ENCODE measurements at regions of chr3 and their contacts with region 1.

Region 1: GRCh38 chr3:152574461-152575079 is 260.4 kb upstream of the P2RY1 start:
- DNase-seq: peak; percentile 47
- ATAC-seq: peak; percentile 69
- H3K4me3 Mint-ChIP-seq: no peak overlapping the region
- H3K27ac Mint-ChIP-seq: no peak overlapping the region
- H3K4me1 Mint-ChIP-seq: peaks cover 20% of the 10 kb centered on the region
- H3K27me3 Mint-ChIP-seq: no peaks in the 10 kb centered on the region
- CTCF ChIP-seq: no peak

Region 2: DNA sequence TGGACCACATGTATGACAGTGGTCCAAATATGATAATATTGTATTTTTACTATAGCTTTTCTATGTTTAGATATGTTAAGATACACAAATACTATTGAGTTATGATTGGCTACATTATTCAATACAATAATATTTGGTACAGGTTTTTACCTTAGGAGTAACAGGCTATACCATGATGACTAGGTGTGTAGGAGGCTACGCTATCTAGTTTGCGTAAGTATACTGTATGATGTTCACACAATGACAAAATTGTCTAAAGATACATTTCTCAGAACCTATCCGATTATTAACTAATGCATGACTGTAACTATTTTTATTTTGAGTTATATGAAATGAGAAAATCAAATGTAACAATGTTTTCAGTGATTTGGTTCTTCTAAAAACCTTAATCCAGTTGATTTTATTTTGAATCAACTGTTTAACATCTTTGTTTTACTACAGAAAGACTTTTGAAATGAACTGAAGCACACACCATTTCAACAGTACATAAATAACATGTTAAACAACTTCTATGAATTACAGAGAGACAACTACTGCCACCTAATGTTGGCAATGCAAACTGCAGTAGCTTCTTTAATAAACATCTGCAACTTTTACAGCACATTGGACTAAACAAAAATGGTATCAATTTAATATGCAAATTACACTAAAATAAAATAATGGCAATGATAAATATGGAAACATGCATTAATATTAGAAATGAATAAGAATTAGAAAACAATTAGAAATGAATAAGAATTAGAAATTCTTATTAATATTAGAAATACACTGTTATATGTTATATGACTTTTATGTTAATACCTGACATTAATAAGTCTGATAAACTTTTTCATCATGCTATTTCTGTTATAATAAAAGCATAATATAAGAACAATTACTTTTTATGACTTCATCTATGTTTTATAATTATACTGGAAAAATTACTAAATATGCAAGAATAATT is 50.1 kb before region 1 on chr3:
- CTCF ChIA-PET with region 1: interaction called, 10 read pairs
- POLR2A ChIA-PET with region 1: interaction called, 3 read pairs
- DNase-seq: no peak
- ATAC-seq: 0 out of 2 replicates have a peak, but pooled peaks have one; percentile 24
- H3K4me3 Mint-ChIP-seq: no peak overlapping the region
- H3K27ac Mint-ChIP-seq: no peak overlapping the region
- H3K4me1 Mint-ChIP-seq: peaks cover 4% of the 10 kb centered on the region; the same call in 1 of the 2 replicates
- H3K27me3 Mint-ChIP-seq: no peaks in the 10 kb centered on the region
- CTCF ChIP-seq: peak; percentile 34; the same call in 1 of the 2 replicates

Region 3: GRCh38 chr3:152564459-152564858 is 10.1 kb before region 1 on chr3:
- CTCF ChIA-PET with region 1: no interaction called
- POLR2A ChIA-PET with region 1: no interaction called
- DNase-seq: no peak
- ATAC-seq: no peak
- H3K4me3 Mint-ChIP-seq: no peak overlapping the region
- H3K27ac Mint-ChIP-seq: no peak overlapping the region
- H3K4me1 Mint-ChIP-seq: no peaks in the 10 kb centered on the region
- H3K27me3 Mint-ChIP-seq: no peaks in the 10 kb centered on the region
- CTCF ChIP-seq: no peak

Region 4: DNA sequence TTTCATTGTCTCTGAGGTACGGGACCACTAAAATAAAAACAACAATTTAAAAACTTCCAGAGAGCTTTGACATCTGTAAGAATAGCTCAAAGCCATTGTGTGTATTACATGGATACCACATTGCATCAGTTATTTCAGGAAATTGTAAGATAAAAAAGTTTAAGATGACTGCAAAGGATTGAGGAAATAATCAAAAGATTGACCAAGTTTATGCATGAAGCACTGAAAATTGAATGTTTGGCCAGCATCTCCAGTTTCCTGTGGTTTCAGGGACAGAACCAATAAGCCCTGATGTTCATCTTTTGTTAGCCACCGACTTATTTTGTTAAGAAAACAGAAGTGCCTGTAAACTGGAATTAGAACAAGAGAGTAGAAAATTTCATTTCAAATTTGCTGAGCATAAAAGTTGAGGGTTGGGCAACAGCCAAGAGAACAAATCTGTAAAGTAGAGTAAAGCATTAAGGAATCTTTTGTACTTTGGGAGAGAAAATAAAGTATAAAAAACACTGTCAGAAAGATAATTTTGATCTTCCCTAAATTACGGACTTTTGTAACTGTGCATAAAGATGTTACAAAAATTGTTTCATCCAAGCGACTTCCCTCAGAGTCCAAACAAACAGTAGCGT is 48.8 kb after region 1 on chr3:
- CTCF ChIA-PET with region 1: no interaction called
- POLR2A ChIA-PET with region 1: no interaction called
- DNase-seq: no peak
- ATAC-seq: no peak
- H3K4me3 Mint-ChIP-seq: no peak overlapping the region
- H3K27ac Mint-ChIP-seq: peak overlapping the region; percentile 44
- H3K4me1 Mint-ChIP-seq: peaks cover 23% of the 10 kb centered on the region
- H3K27me3 Mint-ChIP-seq: no peaks in the 10 kb centered on the region
- CTCF ChIP-seq: no peak

Region 5: DNA sequence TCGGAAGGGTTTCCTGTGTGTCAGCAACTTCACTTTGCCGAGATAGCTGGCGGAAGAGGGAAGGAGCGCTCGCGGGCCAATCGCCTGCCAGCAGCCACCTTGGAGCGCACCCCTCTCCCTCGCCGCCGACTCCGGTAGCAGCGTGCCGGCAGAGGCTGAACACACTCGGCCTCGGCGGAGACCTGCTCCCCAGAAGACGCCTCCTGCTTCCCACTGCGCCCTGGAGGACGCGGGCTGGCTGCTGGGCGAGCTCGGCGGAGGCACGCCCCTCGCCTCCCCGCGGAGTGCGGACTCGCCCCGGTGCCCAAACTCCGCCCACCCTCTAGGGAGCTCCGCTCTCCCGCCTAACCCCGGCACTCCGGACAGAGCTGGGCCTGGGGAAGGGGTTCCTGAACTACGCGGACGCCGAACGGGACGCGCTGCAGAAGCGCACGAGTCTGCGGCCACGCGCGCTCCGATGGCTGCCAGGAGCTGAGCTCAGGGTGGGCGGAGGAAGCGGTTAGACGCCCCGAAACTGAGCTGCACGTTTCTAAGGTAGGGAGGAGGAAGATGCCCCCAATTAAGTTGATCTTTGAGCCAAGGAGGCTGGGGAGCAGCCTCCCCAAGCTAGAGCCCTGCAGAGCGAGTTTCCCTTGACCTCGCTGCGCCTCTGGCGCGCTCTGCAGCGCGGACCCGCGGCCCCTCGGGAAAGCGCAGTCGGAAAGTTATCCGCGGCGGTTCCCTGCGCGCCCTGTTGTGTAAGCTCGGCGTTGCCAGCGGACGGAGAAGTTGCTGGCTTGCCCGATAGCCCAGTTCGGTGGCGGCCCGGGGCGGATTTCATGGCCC is 260.4 kb after region 1 on chr3 and contains the start of gene P2RY1:
- CTCF ChIA-PET with region 1: interaction called, 12 read pairs
- POLR2A ChIA-PET with region 1: no interaction called
- DNase-seq: peak; percentile 90
- ATAC-seq: peak; percentile 88
- H3K4me3 Mint-ChIP-seq: peak within 1 kb of the TSS; percentile 91
- H3K27ac Mint-ChIP-seq: peak within 1 kb of the TSS; percentile 99
- H3K4me1 Mint-ChIP-seq: peaks cover 50% of the 10 kb centered on the region
- H3K27me3 Mint-ChIP-seq: peaks cover 11% of the 10 kb centered on the region
- CTCF ChIP-seq: no peak
- total RNA-seq, gene P2RY1: 31.6 to 47.2 TPM (median 32.9 TPM) in 3 replicates

Region 6: DNA sequence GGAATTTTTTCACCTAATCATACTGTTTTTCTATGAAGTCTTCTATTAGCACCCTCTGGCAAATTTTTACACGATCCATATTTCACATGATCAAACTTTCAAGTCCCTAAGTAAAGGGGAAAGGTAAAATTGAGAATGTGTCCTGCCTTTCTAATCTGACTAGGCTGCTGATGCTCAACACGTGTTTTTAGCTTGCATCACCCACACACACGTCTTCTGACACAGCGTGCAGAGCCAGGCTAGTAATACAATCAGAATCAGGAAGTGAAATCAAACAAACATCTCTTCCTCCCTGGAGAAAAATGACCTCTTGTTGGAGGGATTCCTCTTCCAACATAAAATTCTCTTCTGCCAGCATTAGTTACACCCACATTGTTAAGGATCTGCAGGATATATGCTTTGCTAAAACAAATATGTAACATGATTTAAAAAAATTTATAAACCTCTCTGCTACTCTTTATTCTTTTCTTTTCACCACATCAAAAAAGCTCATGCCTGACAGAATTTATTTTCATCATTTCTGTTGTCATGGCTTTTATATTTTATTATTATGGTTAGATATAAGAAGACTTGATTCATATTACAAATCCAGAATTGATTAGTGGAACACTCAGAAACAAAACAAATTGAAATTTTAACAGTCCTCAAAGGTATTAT is 709.8 kb after region 1 on chr3:
- CTCF ChIA-PET with region 1: no interaction called
- POLR2A ChIA-PET with region 1: no interaction called
- DNase-seq: no peak
- ATAC-seq: no peak
- H3K4me3 Mint-ChIP-seq: no peak overlapping the region
- H3K27ac Mint-ChIP-seq: no peak overlapping the region
- H3K4me1 Mint-ChIP-seq: peaks cover 13% of the 10 kb centered on the region
- H3K27me3 Mint-ChIP-seq: no peaks in the 10 kb centered on the region; the same call in 1 of the 2 replicates
- CTCF ChIP-seq: no peak

Measured in WTC11 (cell line).